PC-9 (cell line): ENCODE measurements at regions of chr15 and their contacts with region 1.

Region 1: DNA sequence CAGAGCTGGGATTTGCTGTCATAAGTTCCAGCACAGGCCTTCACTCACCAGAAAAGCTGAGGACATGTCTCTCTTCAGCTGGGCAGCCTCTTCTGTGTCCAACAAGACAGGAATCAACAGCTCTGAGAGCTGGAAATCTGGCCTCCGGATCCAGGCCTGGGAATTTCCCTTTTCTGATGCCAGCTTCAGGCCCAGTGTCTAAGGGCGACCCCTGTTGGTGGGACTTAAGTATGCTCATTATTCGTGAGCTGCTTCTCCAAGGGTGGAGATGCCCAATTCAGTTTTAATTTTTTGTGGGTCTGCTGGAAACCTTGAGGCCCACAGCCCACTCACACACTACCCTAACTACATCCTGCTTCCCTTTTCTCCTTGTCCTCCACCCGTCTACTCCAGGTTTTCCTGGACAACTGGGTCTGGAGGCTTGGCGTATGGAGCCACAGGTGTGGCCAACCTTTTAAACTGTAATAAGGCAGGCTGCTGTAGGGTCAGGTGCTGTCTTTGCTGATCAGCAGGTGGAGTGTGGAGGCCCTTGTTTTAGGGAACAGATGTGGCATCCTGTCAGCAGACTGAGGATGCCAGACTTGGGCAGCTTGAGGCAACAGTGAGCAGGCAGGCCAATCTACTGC is 2.6 kb upstream of the CEMIP start:
- DNase-seq: peak in 1 of 2 experiments; percentile 14
- H3K4me3 ChIP-seq: no peak overlapping the region
- H3K27ac ChIP-seq: peak overlapping the region; percentile 90
- H3K4me1 ChIP-seq: peaks cover 50% of the 10 kb centered on the region
- H3K27me3 ChIP-seq: no peaks in the 10 kb centered on the region
- CTCF ChIP-seq: peak; percentile 66

Region 2: GRCh38 chr15:80567721-80568157 is 208.8 kb before region 1 on chr15:
- CTCF ChIA-PET with region 1: interaction called, 22 read pairs
- POLR2A ChIA-PET with region 1: no interaction called
- intact Hi-C with region 1: loop called (anchors 1 kb)
- DNase-seq: peak; percentile 54 to 66
- H3K4me3 ChIP-seq: no peak overlapping the region
- H3K27ac ChIP-seq: no peak overlapping the region
- H3K4me1 ChIP-seq: 0 out of 2 replicates have a peak, but pooled peaks cover 4% of the 10 kb centered on the region
- H3K27me3 ChIP-seq: no peaks in the 10 kb centered on the region
- CTCF ChIP-seq: peak; percentile 80

Region 3: DNA sequence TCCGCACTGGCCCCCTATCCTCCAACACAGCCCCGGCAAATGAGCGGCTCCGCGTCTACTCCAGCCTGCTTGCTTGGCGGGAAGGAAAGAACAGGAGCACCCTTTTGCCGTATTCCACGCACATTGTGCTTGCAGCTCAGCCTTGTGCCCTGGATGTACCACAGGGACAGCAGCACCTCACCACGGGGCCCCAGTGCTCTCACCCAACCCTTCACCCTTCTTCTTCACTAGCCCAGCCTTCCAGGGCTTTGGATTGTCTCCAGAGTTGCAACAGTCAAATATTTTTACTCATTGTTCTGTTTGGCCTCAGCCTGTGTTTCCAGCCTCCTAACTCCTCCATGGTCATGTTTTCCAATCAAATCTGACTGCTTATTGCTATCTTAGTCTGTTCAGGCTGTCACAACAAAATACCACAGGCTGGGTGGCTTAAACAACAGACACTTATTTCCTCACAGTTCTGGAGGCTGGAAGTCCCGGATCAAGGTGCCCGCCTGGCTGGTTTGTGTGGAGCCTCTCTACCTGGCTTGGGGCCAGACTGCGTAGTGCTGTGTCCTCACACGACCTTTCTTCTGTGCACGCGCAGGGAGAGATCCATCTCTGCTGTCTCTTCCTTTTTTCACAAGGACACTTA is 160.7 kb before region 1 on chr15:
- CTCF ChIA-PET with region 1: interaction called, 6 read pairs
- POLR2A ChIA-PET with region 1: no interaction called
- intact Hi-C with region 1: loop called (anchors 2 kb)
- DNase-seq: peak; percentile 37 to 61
- H3K4me3 ChIP-seq: no peak overlapping the region
- H3K27ac ChIP-seq: no peak overlapping the region
- H3K4me1 ChIP-seq: no peaks in the 10 kb centered on the region; the same call in 1 of the 2 replicates
- H3K27me3 ChIP-seq: no peaks in the 10 kb centered on the region
- CTCF ChIP-seq: no peak

Region 4: DNA sequence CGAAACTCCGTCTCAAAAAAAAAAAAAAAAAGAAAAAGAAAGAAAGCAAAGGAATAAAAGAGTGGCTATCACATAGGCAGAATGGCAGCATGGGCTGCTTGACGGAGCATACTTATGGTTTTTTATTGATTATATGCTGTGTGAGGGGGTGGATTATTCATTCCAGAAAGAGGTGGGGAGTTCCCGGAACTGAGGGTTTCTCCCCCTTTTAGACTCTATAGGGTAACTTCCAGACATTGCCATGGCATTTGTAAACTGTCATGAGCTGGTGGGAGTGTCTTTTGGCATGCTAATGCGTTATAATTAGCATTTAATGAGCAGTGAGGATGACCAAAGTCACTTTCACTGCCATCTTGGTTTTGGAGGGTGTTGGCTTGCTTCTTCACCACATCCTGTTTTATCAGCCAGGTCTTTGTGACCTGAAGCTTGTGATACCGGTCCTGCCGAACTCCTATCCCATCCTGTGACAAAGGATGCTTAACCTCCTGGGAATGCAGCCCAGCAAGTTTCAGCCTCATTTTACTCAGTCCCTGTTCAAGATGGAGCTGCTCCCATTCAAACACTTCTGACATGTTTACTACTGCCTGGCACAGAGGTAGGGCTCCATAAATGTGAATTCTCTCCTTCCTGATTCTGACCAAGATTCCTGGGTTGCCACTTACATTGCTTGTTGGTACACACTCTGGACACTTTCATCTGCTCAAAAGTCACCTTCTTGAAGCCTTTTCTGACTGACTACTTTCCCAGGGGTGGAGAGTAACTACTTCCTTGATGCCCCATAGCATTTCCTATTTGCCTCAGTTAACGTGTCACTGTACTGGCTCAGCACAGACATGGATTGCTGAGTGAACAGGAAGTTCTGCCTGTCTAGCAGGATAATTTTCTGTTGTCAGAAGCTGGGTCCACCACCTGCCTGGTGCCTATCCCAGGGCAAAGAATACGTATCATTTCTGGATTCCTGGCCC is 97.1 kb before region 1 on chr15:
- CTCF ChIA-PET with region 1: interaction called, 3 read pairs
- POLR2A ChIA-PET with region 1: no interaction called
- intact Hi-C with region 1: loop called (anchors 1 kb)
- DNase-seq: peak; percentile 80 to 97
- H3K4me3 ChIP-seq: peak overlapping the region; percentile 27; the same call in 1 of the 2 replicates
- H3K27ac ChIP-seq: peak overlapping the region; percentile 90
- H3K4me1 ChIP-seq: peaks cover 67% of the 10 kb centered on the region
- H3K27me3 ChIP-seq: no peaks in the 10 kb centered on the region
- CTCF ChIP-seq: no peak

Region 5: DNA sequence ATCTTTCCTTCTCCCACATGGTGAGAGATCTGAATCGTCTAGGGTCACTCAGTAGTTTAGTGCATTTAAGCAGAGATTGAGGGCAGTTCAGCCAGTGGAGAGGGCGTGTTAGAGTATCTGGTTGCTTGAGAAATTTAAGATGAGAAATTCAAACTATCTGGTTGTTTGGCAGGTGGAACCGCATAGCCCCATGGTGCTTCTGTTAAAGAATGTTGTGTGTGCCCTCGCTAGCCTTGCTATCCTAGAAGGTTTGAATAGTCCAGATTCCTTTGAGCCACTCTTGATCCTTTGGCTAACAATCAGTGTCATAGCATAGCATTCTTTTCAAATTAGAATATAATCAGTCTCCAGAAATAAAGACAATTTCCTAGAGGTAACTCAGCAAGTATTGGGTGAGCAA is 49.3 kb before region 1 on chr15:
- CTCF ChIA-PET with region 1: no interaction called
- POLR2A ChIA-PET with region 1: no interaction called
- intact Hi-C with region 1: loop called (anchors 1 kb)
- DNase-seq: peak; percentile 68 to 89
- H3K4me3 ChIP-seq: no peak overlapping the region
- H3K27ac ChIP-seq: peak overlapping the region; percentile 67
- H3K4me1 ChIP-seq: peaks cover 18% of the 10 kb centered on the region
- H3K27me3 ChIP-seq: no peaks in the 10 kb centered on the region
- CTCF ChIP-seq: no peak